ENCODE measurements at regions of chr5 and their contacts with region 1.

Region 1: DNA sequence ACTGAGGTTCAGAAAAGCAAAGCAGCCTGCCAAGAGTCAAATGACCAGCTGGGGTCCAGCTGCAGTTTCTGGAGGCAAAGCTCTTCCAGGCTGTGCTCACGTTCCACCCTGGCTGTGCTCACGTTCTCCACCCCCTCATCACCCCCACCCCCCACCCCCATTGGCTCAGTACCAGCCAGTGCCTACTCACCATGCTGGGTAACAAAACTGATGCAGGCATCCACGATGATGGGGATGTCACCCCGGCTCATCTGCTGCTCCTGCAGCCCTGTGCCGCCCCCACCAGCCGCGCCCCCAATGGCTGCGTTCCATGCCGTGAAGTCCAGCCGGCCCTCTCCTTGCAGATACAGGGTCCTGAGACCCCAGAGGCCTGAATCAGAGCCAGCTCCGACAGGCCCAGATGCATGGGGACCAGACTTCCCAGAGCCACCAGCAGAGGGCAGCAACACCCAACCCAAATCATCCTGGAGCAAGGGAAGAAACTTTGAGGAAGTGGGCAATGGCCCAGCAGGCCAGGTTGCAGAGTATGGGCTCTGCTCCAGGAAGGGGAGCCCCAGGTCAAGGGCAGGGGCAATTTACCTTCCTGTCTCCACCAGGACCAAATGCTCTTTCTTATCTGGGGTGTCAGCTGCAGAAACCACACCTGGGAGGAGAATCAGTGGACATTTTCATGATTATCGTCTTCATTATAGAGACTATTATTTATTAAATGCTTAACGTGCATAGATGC is 13.7 kb upstream of the FCHSD1 start:
- DNase-seq: peak; percentile 49 to 88 (median 76)
- ATAC-seq: peak; percentile 83
- H3K4me3 ChIP-seq: no peak overlapping the region
- H3K4me3 Mint-ChIP-seq: no peak overlapping the region
- H3K27ac ChIP-seq: no peak overlapping the region
- H3K27ac Mint-ChIP-seq: no peak overlapping the region
- H3K4me1 ChIP-seq: no peaks in the 10 kb centered on the region
- H3K4me1 Mint-ChIP-seq: peaks cover 3% of the 10 kb centered on the region
- H3K27me3 ChIP-seq: no peaks in the 10 kb centered on the region
- H3K27me3 Mint-ChIP-seq: no peaks in the 10 kb centered on the region
- CTCF ChIP-seq: peak; percentile 83

Region 2: DNA sequence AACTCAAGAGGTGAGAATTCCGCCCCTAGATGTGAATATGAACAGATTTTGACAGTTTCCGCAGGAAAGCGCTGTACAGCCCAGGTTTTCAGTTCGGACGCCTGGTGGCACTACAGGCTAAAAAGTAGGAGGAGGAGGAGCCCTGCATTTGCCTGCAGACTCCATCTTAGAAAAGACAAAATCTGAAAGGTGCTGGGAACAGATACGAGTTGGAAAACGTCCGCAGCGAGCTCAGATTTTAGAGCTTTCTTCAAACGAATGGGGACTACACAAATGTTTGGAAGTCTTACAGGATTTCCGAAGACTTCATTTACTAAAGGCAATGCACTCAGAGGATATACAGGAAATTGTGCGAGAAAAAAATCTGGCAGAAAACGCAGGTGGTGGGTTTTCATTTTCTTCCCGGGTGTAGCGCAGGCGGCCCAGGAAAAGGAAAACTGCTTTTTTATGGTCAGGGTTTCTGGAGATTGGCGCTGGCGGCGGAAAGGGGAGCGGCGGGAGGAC is 580.4 kb before region 1 on chr5:
- CTCF ChIA-PET with region 1: no interaction called
- POLR2A ChIA-PET with region 1: no interaction called
- intact Hi-C with region 1: no loop called
- DNase-seq: peak in 7 of 9 experiments; percentile 2 to 61 (median 23)
- ATAC-seq: peak; percentile 63
- H3K4me3 ChIP-seq: peak overlapping the region; percentile 31 to 43
- H3K4me3 Mint-ChIP-seq: peak overlapping the region; percentile 85
- H3K27ac ChIP-seq: no peak overlapping the region
- H3K27ac Mint-ChIP-seq: no peak overlapping the region
- H3K4me1 ChIP-seq: no peaks in the 10 kb centered on the region
- H3K4me1 Mint-ChIP-seq: peaks cover 9% of the 10 kb centered on the region
- H3K27me3 ChIP-seq: peaks cover 0 to 3% of the 10 kb centered on the region in 2 experiments
- H3K27me3 Mint-ChIP-seq: peaks cover 38% of the 10 kb centered on the region
- CTCF ChIP-seq: peak; percentile 46

Region 3: GRCh38 chr5:141646026-141646425 is 18.9 kb before region 1 on chr5:
- CTCF ChIA-PET with region 1: interaction called, 11 read pairs
- POLR2A ChIA-PET with region 1: interaction called, 5 read pairs
- intact Hi-C with region 1: no loop called
- DNase-seq: no peak
- ATAC-seq: no peak
- H3K4me3 ChIP-seq: no peak overlapping the region
- H3K4me3 Mint-ChIP-seq: no peak overlapping the region
- H3K27ac ChIP-seq: no peak overlapping the region
- H3K27ac Mint-ChIP-seq: peak overlapping the region; percentile 50
- H3K4me1 ChIP-seq: peaks cover 10% of the 10 kb centered on the region
- H3K4me1 Mint-ChIP-seq: peaks cover 40% of the 10 kb centered on the region
- H3K27me3 ChIP-seq: no peaks in the 10 kb centered on the region
- H3K27me3 Mint-ChIP-seq: no peaks in the 10 kb centered on the region
- CTCF ChIP-seq: no peak

Region 4: DNA sequence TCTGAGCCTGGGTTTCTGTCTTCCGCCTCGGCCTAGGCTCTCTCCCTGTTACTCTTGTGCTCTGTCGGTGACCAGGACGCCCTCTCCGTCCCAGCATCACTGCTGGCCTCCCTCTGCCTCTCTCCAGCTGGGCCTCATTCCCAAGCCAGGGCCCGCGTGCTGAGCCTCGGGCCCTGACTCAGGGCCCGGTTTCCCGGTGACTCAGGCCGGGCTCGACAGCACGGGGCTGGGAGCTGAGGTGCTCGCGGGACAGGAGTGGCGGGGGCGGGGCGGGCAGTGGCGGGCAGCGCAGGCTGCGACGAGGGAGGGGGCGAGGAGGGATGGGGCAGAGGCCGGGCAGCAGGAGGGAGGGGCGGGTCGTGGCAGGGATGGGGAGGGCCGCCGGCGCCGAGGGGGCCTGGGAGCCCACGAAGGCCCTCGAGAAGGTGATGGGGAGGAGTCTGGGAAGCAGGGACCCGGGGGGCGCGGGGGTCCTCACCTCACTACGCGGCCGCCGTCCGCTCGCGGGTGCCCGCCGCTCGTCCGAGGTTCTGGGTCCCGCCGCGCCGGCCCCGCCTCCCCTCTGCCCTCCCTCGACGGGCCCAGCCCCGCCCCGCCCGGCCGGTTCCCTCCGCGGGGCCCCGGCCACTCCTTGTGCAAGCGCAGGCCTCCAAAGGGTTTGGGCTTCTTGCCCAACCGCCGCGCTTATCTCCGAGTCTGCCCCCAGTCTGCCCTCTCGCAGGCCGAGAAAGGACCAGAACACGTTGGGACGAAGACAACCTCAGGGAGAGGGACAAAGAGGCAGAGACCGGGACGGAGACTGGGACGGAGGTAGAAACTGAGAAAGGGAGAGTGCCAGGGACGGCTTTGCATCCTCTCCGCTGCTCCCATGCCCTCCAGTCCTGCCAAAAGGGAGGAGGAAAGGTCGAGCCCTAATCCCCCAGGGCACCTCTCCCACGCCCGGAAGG is 17.1 kb after region 1 on chr5 and contains the start of gene ARAP3:
- CTCF ChIA-PET with region 1: interaction called, 14 read pairs
- POLR2A ChIA-PET with region 1: interaction called, 3 read pairs
- intact Hi-C with region 1: no loop called
- DNase-seq: peak in 7 of 9 experiments; percentile 30 to 78 (median 49)
- ATAC-seq: peak; percentile 54
- H3K4me3 ChIP-seq: peak within 1 kb of the TSS; percentile 55 to 56
- H3K4me3 Mint-ChIP-seq: peak within 1 kb of the TSS; percentile 76
- H3K27ac ChIP-seq: peak within 1 kb of the TSS in 1 of 2 experiments; percentile 34
- H3K27ac Mint-ChIP-seq: peak within 1 kb of the TSS; percentile 49
- H3K4me1 ChIP-seq: peaks cover 30% of the 10 kb centered on the region
- H3K4me1 Mint-ChIP-seq: peaks cover 28% of the 10 kb centered on the region
- H3K27me3 ChIP-seq: no peaks in the 10 kb centered on the region
- H3K27me3 Mint-ChIP-seq: no peaks in the 10 kb centered on the region
- CTCF ChIP-seq: no peak
- total RNA-seq, gene ARAP3: 0.73 to 1.2 TPM

Region 5: DNA sequence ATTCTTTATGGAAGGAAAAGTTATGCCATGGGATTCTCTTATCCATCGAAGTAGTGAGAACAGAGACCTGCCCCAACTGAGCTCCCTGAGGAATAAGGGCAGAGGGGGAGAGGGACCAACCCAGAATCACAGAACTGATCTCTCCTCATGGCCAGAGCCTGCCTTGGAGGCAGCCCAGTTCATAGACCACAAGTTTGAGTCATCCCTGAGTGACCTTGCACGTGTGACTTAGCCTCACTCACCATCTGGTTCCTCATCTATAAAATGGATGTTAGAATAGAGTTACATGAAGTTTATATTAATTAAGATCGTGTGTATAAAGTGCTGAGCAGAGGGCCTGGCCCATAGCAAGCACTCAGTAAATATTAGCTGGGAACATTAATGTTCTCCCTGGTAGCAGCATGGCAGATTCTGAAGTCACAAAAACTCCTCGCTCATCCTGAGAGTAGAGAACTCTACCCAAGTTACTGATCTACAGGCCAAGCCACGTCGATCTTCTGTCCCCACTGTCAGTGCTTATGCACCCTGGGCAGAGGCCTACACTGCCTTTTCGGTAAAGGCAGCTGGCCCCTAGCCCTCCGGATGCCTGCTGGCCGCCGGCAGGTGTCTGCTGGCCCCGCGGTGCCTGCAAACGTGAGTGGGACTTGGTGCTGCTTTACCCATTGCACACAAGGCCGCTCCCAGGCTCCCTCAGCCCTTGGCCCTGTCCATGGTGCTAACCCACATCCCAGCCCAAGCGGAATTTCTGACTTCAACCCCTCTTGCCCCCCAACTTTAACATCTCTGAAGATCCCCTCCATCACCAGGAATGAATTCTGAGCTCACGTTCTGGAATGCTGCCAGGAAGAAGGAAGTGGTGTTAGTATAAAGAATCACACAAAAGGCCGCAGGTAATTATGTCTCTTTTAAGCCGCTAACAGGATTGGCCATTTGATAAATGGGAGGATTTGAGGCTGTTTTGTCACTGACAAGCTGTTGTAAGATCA is 78.3 kb after region 1 on chr5:
- CTCF ChIA-PET with region 1: no interaction called
- POLR2A ChIA-PET with region 1: no interaction called
- intact Hi-C with region 1: loop called in 1 of 2 experiments (anchors 2 kb)
- DNase-seq: peak in 3 of 9 experiments; percentile 9 to 17 (median 10)
- ATAC-seq: no peak
- H3K4me3 ChIP-seq: no peak overlapping the region
- H3K4me3 Mint-ChIP-seq: no peak overlapping the region
- H3K27ac ChIP-seq: no peak overlapping the region
- H3K27ac Mint-ChIP-seq: no peak overlapping the region
- H3K4me1 ChIP-seq: no peaks in the 10 kb centered on the region
- H3K4me1 Mint-ChIP-seq: no peaks in the 10 kb centered on the region
- H3K27me3 ChIP-seq: peaks cover 0 to 9% of the 10 kb centered on the region in 2 experiments
- H3K27me3 Mint-ChIP-seq: peaks cover 68% of the 10 kb centered on the region
- CTCF ChIP-seq: no peak

Region 6: GRCh38 chr5:141825791-141826560 is 161.1 kb after region 1 on chr5:
- CTCF ChIA-PET with region 1: interaction called, 14 read pairs
- POLR2A ChIA-PET with region 1: no interaction called
- intact Hi-C with region 1: loop called in 1 of 2 experiments (anchors 1 kb)
- DNase-seq: peak in 2 of 9 experiments; percentile 32 to 38
- ATAC-seq: no peak
- H3K4me3 ChIP-seq: no peak overlapping the region
- H3K4me3 Mint-ChIP-seq: no peak overlapping the region
- H3K27ac ChIP-seq: no peak overlapping the region
- H3K27ac Mint-ChIP-seq: no peak overlapping the region
- H3K4me1 ChIP-seq: no peaks in the 10 kb centered on the region
- H3K4me1 Mint-ChIP-seq: no peaks in the 10 kb centered on the region
- H3K27me3 ChIP-seq: no peaks in the 10 kb centered on the region
- H3K27me3 Mint-ChIP-seq: peaks cover 8% of the 10 kb centered on the region
- CTCF ChIP-seq: no peak

Region 7: GRCh38 chr5:142699184-142699720 is 1034.4 kb after region 1 on chr5:
- CTCF ChIA-PET with region 1: interaction called, 4 read pairs
- POLR2A ChIA-PET with region 1: no interaction called
- intact Hi-C with region 1: loop called in 1 of 2 experiments (anchors 10 kb)
- DNase-seq: peak; percentile 53 to 83 (median 74)
- ATAC-seq: peak; percentile 91
- H3K4me3 ChIP-seq: no peak overlapping the region
- H3K4me3 Mint-ChIP-seq: no peak overlapping the region
- H3K27ac ChIP-seq: no peak overlapping the region
- H3K27ac Mint-ChIP-seq: no peak overlapping the region
- H3K4me1 ChIP-seq: no peaks in the 10 kb centered on the region
- H3K4me1 Mint-ChIP-seq: no peaks in the 10 kb centered on the region
- H3K27me3 ChIP-seq: no peaks in the 10 kb centered on the region
- H3K27me3 Mint-ChIP-seq: no peaks in the 10 kb centered on the region
- CTCF ChIP-seq: peak; percentile 84

Measured in CD8-positive, alpha-beta T cell (primary cell).